Dendritic cell treated with granulocyte-macrophage colony-stimulating factor and Interleukin-4, amounts not matched to agents 40 ng/mL and 50 ng/mL, for 4 days (primary cell): ENCODE measurements at regions of chr12 and their contacts with region 1.

Region 1: GRCh38 chr12:110689281-110690126 is 589 bp upstream of the HVCN1 start:
- H3K4me3 Mint-ChIP-seq: peak overlapping the region; percentile 84
- H3K27ac Mint-ChIP-seq: peak overlapping the region; percentile 88
- H3K4me1 Mint-ChIP-seq: peaks cover 90% of the 10 kb centered on the region
- H3K27me3 Mint-ChIP-seq: no peaks in the 10 kb centered on the region

Region 2: GRCh38 chr12:110468212-110469048 is 221.1 kb before region 1 on chr12 and contains the starts of genes FAM216A and GPN3:
- intact Hi-C with region 1: loop called (anchors 10 kb)
- H3K4me3 Mint-ChIP-seq: peak within 1 kb of the TSS; percentile 96
- H3K27ac Mint-ChIP-seq: peak within 1 kb of the TSS; percentile 84
- H3K4me1 Mint-ChIP-seq: peaks cover 33% of the 10 kb centered on the region
- H3K27me3 Mint-ChIP-seq: no peaks in the 10 kb centered on the region

Region 3: DNA sequence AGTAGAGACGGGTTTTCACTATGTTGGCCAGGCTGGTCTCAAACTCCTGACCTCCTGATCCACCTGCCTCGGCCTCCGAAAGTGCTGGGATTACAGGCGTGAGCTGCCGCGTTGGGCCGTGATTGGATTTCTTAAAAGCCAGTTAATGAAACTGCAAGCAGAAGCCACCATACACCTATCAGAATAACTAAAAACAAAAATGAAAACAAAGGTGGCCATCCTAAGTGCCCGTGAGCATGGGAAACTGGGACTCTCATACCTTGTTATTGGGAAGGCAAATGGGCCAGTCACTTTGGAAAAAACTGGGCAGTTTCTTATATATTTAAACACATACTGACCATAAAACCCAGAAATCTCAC is 83.3 kb before region 1 on chr12:
- intact Hi-C with region 1: loop called (anchors 5 kb)
- H3K4me3 Mint-ChIP-seq: peak overlapping the region; percentile 76
- H3K27ac Mint-ChIP-seq: peak overlapping the region; percentile 96
- H3K4me1 Mint-ChIP-seq: peaks cover 17% of the 10 kb centered on the region
- H3K27me3 Mint-ChIP-seq: no peaks in the 10 kb centered on the region

Region 4: GRCh38 chr12:110742718-110743570 is 53.4 kb after region 1 on chr12 and contains the start of gene PPP1CC:
- intact Hi-C with region 1: loop called (anchors 1 kb)
- H3K4me3 Mint-ChIP-seq: peak within 1 kb of the TSS; percentile 95
- H3K27ac Mint-ChIP-seq: peak within 1 kb of the TSS; percentile 90
- H3K4me1 Mint-ChIP-seq: peaks cover 46% of the 10 kb centered on the region
- H3K27me3 Mint-ChIP-seq: no peaks in the 10 kb centered on the region